Calu3 (cell line): ENCODE measurements at regions of chr14 and their contacts with region 1.

Region 1: GRCh38 chr14:60561845-60562746 is 53.1 kb downstream of the SIX6 start:
- DNase-seq: peak; percentile 56
- H3K4me3 Mint-ChIP-seq: no peak overlapping the region
- H3K27ac Mint-ChIP-seq: no peak overlapping the region
- H3K4me1 Mint-ChIP-seq: no peaks in the 10 kb centered on the region
- H3K27me3 Mint-ChIP-seq: no peaks in the 10 kb centered on the region
- CTCF ChIP-seq: peak; percentile 45

Region 2: GRCh38 chr14:60064491-60065072 is 497.5 kb before region 1 on chr14:
- CTCF ChIA-PET with region 1: no interaction called
- intact Hi-C with region 1: loop called (anchors 5 kb)
- DNase-seq: no peak
- H3K4me3 Mint-ChIP-seq: no peak overlapping the region
- H3K27ac Mint-ChIP-seq: no peak overlapping the region
- H3K4me1 Mint-ChIP-seq: no peaks in the 10 kb centered on the region
- H3K27me3 Mint-ChIP-seq: no peaks in the 10 kb centered on the region
- CTCF ChIP-seq: no peak

Region 3: GRCh38 chr14:60195179-60195810 is 366.8 kb before region 1 on chr14:
- CTCF ChIA-PET with region 1: no interaction called
- intact Hi-C with region 1: loop called (anchors 1 kb)
- DNase-seq: no peak
- H3K4me3 Mint-ChIP-seq: no peak overlapping the region
- H3K27ac Mint-ChIP-seq: no peak overlapping the region
- H3K4me1 Mint-ChIP-seq: peaks cover 9% of the 10 kb centered on the region
- H3K27me3 Mint-ChIP-seq: no peaks in the 10 kb centered on the region
- CTCF ChIP-seq: no peak

Region 4: GRCh38 chr14:60249321-60250256 is 312.5 kb before region 1 on chr14:
- CTCF ChIA-PET with region 1: no interaction called
- intact Hi-C with region 1: loop called (anchors 10 kb)
- DNase-seq: peak; percentile 76
- H3K4me3 Mint-ChIP-seq: peak overlapping the region; percentile 99
- H3K27ac Mint-ChIP-seq: peak overlapping the region; percentile 99
- H3K4me1 Mint-ChIP-seq: peaks cover 42% of the 10 kb centered on the region
- H3K27me3 Mint-ChIP-seq: no peaks in the 10 kb centered on the region
- CTCF ChIP-seq: no peak

Region 5: GRCh38 chr14:60331201-60332045 is 230.7 kb before region 1 on chr14:
- CTCF ChIA-PET with region 1: interaction called, 4 read pairs
- intact Hi-C with region 1: loop called (anchors 1 kb)
- DNase-seq: peak; percentile 71
- H3K4me3 Mint-ChIP-seq: peak overlapping the region; percentile 76
- H3K27ac Mint-ChIP-seq: no peak overlapping the region
- H3K4me1 Mint-ChIP-seq: peaks cover 23% of the 10 kb centered on the region
- H3K27me3 Mint-ChIP-seq: peaks cover 30% of the 10 kb centered on the region
- CTCF ChIP-seq: peak; percentile 72

Region 6: GRCh38 chr14:60349663-60350365 is 212.3 kb before region 1 on chr14:
- CTCF ChIA-PET with region 1: interaction called, 13 read pairs
- intact Hi-C with region 1: loop called (anchors 1 kb)
- DNase-seq: peak; percentile 31
- H3K4me3 Mint-ChIP-seq: no peak overlapping the region
- H3K27ac Mint-ChIP-seq: no peak overlapping the region
- H3K4me1 Mint-ChIP-seq: no peaks in the 10 kb centered on the region
- H3K27me3 Mint-ChIP-seq: no peaks in the 10 kb centered on the region
- CTCF ChIP-seq: peak; percentile 65

Region 7: DNA sequence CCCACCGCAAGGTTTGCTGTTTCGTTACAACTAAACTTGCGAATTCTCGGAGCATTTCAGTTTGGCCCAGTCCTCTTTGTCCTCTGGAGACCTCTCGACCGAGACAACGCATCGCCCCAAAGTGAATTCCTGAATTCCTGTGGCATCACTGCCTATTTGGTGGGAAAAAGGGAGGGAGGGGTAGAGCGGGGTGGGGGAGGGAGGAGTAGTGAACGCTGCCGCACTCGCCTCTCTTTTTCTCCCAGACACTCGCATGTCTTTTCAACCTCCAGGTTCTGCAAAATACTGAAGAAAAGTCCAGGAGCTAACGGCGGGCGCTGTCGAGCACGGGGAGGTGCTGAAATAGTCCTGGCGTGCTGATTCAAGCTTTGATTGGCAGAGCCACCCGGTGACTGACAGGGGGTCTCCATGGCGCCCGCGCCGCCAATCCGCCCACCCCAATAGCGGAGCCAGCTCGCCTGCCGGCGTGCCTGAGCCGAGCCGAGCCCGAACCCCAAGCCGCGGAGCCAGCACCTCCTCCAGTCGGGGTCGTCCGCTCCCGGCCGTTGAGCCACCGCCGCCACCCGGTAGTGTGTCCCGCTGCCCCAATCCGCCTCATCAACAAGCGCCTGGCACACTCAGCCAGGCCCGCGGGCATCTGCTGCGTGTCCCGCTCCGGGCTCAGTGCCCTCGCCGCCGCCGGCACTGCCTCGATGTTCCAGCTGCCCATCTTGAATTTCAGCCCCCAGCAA is 53.2 kb before region 1 on chr14 and contains the start of gene SIX6:
- CTCF ChIA-PET with region 1: no interaction called
- intact Hi-C with region 1: no loop called
- DNase-seq: no peak
- H3K4me3 Mint-ChIP-seq: no peak within 1 kb of the TSS
- H3K27ac Mint-ChIP-seq: no peak within 1 kb of the TSS
- H3K4me1 Mint-ChIP-seq: no peaks in the 10 kb centered on the region
- H3K27me3 Mint-ChIP-seq: peaks cover 42% of the 10 kb centered on the region
- CTCF ChIP-seq: no peak
- total RNA-seq, gene SIX6: not detected in 2 replicates

Region 8: DNA sequence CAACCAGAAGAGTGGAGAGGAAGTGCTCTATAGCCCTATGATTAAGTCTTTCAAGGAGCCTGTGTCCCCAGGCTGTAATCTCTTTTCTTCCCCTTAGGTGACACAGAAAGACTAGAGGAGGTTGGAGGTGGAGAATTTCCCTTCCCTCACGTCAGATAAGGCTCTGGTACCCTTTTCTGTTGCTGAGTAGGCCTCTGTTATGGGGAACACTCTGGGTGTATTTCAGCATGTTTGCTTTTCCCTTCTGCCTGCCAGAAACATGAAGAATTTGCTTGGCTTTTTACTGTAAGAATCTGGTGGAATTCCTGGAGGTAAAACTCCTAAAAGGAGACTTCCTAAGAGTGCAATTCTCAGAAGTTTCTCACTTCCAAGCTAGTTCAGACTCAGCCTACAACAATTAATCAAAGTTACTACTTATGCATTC is 28.9 kb after region 1 on chr14:
- CTCF ChIA-PET with region 1: no interaction called
- intact Hi-C with region 1: no loop called
- DNase-seq: no peak
- H3K4me3 Mint-ChIP-seq: no peak overlapping the region
- H3K27ac Mint-ChIP-seq: no peak overlapping the region
- H3K4me1 Mint-ChIP-seq: no peaks in the 10 kb centered on the region
- H3K27me3 Mint-ChIP-seq: no peaks in the 10 kb centered on the region
- CTCF ChIP-seq: no peak

Region 9: GRCh38 chr14:60602291-60602690 is 40.2 kb after region 1 on chr14:
- CTCF ChIA-PET with region 1: no interaction called
- intact Hi-C with region 1: no loop called
- DNase-seq: no peak
- H3K4me3 Mint-ChIP-seq: no peak overlapping the region
- H3K27ac Mint-ChIP-seq: no peak overlapping the region
- H3K4me1 Mint-ChIP-seq: no peaks in the 10 kb centered on the region
- H3K27me3 Mint-ChIP-seq: peaks cover 14% of the 10 kb centered on the region
- CTCF ChIP-seq: no peak

Region 10: GRCh38 chr14:61252369-61253063 is 690.4 kb after region 1 on chr14:
- CTCF ChIA-PET with region 1: no interaction called
- intact Hi-C with region 1: loop called (anchors 5 kb)
- DNase-seq: peak; percentile 77
- H3K4me3 Mint-ChIP-seq: no peak overlapping the region
- H3K27ac Mint-ChIP-seq: no peak overlapping the region
- H3K4me1 Mint-ChIP-seq: peaks cover 7% of the 10 kb centered on the region
- H3K27me3 Mint-ChIP-seq: no peaks in the 10 kb centered on the region
- CTCF ChIP-seq: peak; percentile 50